PC-3 (cell line): ENCODE measurements at regions of chr1 and their contacts with region 1.

Region 1: GRCh38 chr1:93552741-93553455 is 105.0 kb downstream of the FNBP1L start:
- DNase-seq: no peak
- ATAC-seq: peak; percentile 50
- H3K4me3 ChIP-seq: no peak overlapping the region
- H3K27ac ChIP-seq: no peak overlapping the region
- H3K4me1 ChIP-seq: peaks cover 28% of the 10 kb centered on the region
- H3K27me3 ChIP-seq: no peaks in the 10 kb centered on the region
- CTCF ChIP-seq: no peak

Region 2: GRCh38 chr1:93502561-93502960 is 50.3 kb before region 1 on chr1:
- CTCF ChIA-PET with region 1: no interaction called
- POLR2A ChIA-PET with region 1: interaction called, 4 read pairs
- intact Hi-C with region 1: loop called (anchors 10 kb)
- DNase-seq: peak; percentile 15
- ATAC-seq: no peak
- H3K4me3 ChIP-seq: no peak overlapping the region
- H3K27ac ChIP-seq: no peak overlapping the region
- H3K4me1 ChIP-seq: peaks cover 6% of the 10 kb centered on the region
- H3K27me3 ChIP-seq: no peaks in the 10 kb centered on the region
- CTCF ChIP-seq: no peak

Region 3: DNA sequence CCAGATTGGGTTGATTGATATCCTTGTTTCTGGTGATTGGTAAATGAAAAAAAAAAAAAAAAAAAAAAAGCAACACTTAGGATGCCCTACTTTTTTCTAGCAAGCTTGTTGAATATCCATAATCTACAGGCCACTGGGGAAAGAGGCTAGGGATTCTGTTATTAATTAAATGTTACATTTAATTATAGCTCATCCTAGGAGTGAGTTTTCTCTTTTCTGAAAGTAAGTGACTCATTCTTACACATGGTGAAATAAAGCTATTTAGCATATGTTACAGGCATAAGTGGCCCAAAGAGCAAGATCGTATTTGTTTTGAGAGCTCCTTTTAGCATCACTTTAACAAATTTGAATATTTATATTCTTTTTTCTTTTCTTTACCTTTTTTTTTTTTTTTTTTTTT is 10.5 kb before region 1 on chr1:
- CTCF ChIA-PET with region 1: no interaction called
- POLR2A ChIA-PET with region 1: interaction called, 19 read pairs
- intact Hi-C with region 1: no loop called
- DNase-seq: no peak
- ATAC-seq: no peak
- H3K4me3 ChIP-seq: no peak overlapping the region
- H3K27ac ChIP-seq: no peak overlapping the region
- H3K4me1 ChIP-seq: no peaks in the 10 kb centered on the region
- H3K27me3 ChIP-seq: no peaks in the 10 kb centered on the region
- CTCF ChIP-seq: no peak